Endothelial cell of umbilical vein (primary cell): ENCODE measurements at regions of chr3 and their contacts with region 1.

Region 1: DNA sequence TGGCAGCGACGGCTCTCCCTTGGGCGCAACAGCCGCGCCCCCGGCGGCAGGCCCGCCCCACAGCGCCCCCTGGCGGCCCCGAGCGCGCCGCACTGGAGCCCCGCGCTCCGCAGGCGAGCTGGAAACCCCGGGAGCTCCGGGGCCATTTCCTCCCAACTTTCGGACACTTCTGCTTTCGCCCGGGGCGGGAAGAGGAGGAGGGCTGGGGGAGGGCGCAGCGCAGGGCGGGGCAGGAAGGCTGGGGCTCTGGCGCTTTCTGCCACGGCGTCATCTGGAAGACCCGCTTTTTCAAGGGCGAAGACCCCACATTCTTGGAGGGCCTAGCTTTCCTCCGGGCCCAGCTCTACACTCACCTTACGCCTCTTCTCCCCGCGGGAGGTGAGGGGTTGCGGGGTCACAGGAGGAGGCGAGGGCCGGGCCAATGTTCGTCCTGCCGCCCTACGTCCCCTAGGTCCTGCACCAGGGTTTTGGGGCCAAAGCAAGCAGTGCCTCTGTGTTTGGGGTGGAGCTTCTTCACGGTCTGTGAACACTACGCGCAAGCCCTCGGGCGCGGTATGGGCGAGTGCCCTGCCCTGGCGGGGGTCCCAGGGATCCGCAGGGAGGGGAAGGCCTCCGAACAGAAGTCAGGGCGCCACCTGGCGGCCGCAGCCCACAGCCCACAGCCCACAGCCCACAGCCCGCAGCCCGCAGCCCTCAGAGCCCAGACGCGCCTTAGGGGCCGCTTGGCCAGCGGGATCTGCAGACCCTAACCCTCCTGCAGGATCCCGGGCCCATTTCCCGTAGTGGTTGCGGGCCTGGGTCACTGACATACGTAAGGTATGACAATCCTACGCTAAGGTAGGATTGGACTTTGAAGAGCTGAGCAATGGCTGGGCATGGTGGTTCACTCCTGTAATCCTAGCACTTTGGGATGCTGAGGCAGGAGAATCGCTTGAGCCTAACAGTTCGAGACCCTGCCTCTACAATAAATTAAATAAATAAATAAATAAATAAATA is 31.1 kb downstream of the FOXL2 start:
- DNase-seq: peak; percentile 88
- H3K4me3 ChIP-seq: peak overlapping the region; percentile 12 to 81 (median 64)
- H3K27ac ChIP-seq: peak overlapping the region; percentile 74
- H3K4me1 ChIP-seq: peaks cover 8% of the 10 kb centered on the region
- H3K27me3 ChIP-seq: no peaks in the 10 kb centered on the region
- CTCF ChIP-seq: peak; percentile 92 to 97
- POLR2A ChIP-seq: no peak

Region 2: GRCh38 chr3:138600100-138600745 is 315.6 kb before region 1 on chr3:
- CTCF ChIA-PET with region 1: interaction called, 182 read pairs
- POLR2A ChIA-PET with region 1: interaction called, 11 read pairs
- dilution Hi-C with region 1: no loop called
- intact Hi-C with region 1: no loop called
- DNase-seq: no peak
- H3K4me3 ChIP-seq: no peak overlapping the region
- H3K27ac ChIP-seq: no peak overlapping the region
- H3K4me1 ChIP-seq: no peaks in the 10 kb centered on the region
- H3K27me3 ChIP-seq: no peaks in the 10 kb centered on the region
- CTCF ChIP-seq: no peak
- POLR2A ChIP-seq: no peak

Region 3: GRCh38 chr3:138686771-138687221 is 229.0 kb before region 1 on chr3:
- CTCF ChIA-PET with region 1: interaction called, 41 read pairs
- POLR2A ChIA-PET with region 1: no interaction called
- dilution Hi-C with region 1: no loop called
- intact Hi-C with region 1: no loop called
- DNase-seq: peak; percentile 47
- H3K4me3 ChIP-seq: no peak overlapping the region
- H3K27ac ChIP-seq: no peak overlapping the region
- H3K4me1 ChIP-seq: peaks cover 4% of the 10 kb centered on the region
- H3K27me3 ChIP-seq: no peaks in the 10 kb centered on the region
- CTCF ChIP-seq: no peak
- POLR2A ChIP-seq: no peak

Region 4: GRCh38 chr3:138732456-138732855 is 183.3 kb before region 1 on chr3:
- CTCF ChIA-PET with region 1: interaction called, 25 read pairs
- POLR2A ChIA-PET with region 1: no interaction called
- dilution Hi-C with region 1: no loop called
- intact Hi-C with region 1: no loop called
- DNase-seq: no peak
- H3K4me3 ChIP-seq: no peak overlapping the region
- H3K27ac ChIP-seq: no peak overlapping the region
- H3K4me1 ChIP-seq: no peaks in the 10 kb centered on the region
- H3K27me3 ChIP-seq: no peaks in the 10 kb centered on the region
- CTCF ChIP-seq: no peak
- POLR2A ChIP-seq: no peak

Region 5: DNA sequence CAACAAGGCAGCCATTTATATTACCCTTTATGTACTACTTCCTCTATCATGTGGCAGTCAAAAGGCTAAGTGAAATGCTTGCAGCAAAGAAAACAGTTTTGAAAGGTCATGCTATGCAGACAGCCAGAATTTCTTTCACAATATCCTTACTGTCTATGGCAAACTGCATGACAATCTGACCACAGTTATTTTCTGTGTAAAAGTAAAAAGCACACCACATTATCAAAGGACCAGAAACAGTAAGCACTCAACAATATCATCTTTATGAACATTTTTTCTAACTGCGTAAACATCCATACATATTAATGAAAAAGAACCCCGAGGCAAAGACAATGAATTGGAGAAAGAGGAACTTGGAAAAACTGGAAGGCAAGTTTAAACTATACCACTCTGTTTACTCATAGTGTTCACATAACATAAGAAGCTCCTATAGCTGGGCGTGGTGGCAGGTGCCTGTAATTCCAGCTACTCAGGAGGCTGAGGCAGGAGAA is 129.0 kb before region 1 on chr3:
- CTCF ChIA-PET with region 1: interaction called, 26 read pairs
- POLR2A ChIA-PET with region 1: no interaction called
- dilution Hi-C with region 1: no loop called
- intact Hi-C with region 1: no loop called
- DNase-seq: no peak
- H3K4me3 ChIP-seq: no peak overlapping the region
- H3K27ac ChIP-seq: no peak overlapping the region
- H3K4me1 ChIP-seq: no peaks in the 10 kb centered on the region
- H3K27me3 ChIP-seq: no peaks in the 10 kb centered on the region
- CTCF ChIP-seq: no peak
- POLR2A ChIP-seq: no peak

Region 6: DNA sequence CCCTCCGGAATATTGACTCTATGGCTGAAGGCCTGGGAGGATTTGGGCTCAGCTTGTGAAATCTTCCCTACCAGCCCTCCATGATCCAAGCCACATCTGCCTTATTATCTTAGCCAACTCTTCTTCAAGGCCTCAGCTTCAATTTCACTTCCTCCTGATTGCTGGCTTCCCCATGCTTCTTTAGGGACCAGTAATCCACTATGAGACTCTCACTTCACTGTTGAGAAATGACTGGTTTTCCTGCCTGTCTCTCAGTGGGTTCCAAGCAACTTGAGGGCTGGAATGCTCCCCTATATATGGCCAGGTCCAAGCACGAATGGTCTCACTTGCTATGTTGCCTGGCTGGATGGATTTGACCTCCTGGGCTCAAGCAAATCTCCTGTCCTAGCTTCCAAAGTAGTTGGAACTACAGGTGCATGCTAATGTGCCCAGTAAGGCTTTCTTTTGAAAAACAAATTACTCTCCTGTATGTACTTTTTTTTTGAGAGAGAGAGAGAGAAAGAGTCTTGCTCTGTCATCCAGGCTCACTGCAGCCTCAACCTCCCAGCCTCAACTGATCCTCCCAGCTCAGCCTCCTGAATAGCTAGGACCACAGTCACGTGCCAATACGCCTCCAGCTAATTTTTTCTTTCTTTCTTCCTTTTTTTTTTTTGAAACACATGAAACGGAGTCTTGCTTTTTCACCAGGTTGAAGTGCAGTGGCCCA is 73.2 kb before region 1 on chr3:
- CTCF ChIA-PET with region 1: interaction called, 14 read pairs
- POLR2A ChIA-PET with region 1: no interaction called
- dilution Hi-C with region 1: no loop called
- intact Hi-C with region 1: no loop called
- DNase-seq: no peak
- H3K4me3 ChIP-seq: no peak overlapping the region
- H3K27ac ChIP-seq: no peak overlapping the region
- H3K4me1 ChIP-seq: peaks cover 4% of the 10 kb centered on the region
- H3K27me3 ChIP-seq: no peaks in the 10 kb centered on the region
- CTCF ChIP-seq: no peak
- POLR2A ChIP-seq: no peak

Region 7: DNA sequence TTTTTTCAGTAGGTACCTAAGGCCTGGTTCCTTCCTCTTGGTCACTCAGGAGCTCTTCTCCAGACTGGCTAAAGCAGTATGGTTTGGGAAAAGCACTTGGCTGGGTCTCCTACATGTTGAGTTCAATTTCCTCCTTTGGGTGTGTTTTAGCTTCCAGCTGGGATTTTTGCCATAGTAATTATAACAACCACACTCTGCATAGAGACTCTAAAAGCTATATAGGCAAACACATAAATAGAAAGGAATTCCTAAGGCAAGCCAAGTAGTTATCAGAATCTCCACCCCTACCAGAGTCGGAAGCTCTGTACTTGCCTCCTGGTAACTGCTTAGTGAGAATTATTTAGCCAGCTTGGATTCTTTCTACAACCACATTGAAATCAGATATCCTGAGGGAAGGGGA is 17.5 kb before region 1 on chr3:
- CTCF ChIA-PET with region 1: interaction called, 59 read pairs
- POLR2A ChIA-PET with region 1: no interaction called
- dilution Hi-C with region 1: no loop called
- intact Hi-C with region 1: no loop called
- DNase-seq: peak; percentile 50
- H3K4me3 ChIP-seq: no peak overlapping the region
- H3K27ac ChIP-seq: no peak overlapping the region
- H3K4me1 ChIP-seq: no peaks in the 10 kb centered on the region
- H3K27me3 ChIP-seq: no peaks in the 10 kb centered on the region
- CTCF ChIP-seq: no peak
- POLR2A ChIP-seq: no peak